B cell (primary cell): ENCODE measurements at regions of chr11 and their contacts with region 1.

Region 1: DNA sequence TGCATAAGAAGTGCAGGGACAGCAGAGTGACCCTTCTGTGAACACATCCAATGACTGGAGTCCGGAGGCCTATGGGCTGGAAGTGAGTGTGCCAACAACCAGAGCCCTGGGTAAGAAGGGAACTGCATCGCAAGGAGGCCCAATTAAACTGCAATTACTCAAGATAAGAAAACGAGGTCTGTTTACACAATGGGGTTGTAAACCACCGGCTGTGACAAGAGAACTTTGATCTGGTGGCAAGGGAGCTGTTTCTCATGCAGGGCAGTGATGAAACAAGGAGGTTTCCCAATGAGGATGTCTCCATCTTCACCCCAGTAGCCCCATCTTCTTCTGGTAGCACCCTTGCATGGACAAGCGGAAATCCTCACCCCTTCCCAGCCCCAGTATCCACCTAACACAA is 21.5 kb downstream of the ETS1 start:
- DNase-seq: no peak
- ATAC-seq: no peak
- H3K4me3 ChIP-seq: no peak overlapping the region
- H3K4me3 Mint-ChIP-seq: no peak overlapping the region
- H3K27ac ChIP-seq: peak overlapping the region in 1 of 2 donors; percentile 33
- H3K27ac Mint-ChIP-seq: peak overlapping the region; percentile 65
- H3K4me1 ChIP-seq: peaks cover 50 to 57% of the 10 kb centered on the region in 2 donors
- H3K4me1 Mint-ChIP-seq: peaks cover 67% of the 10 kb centered on the region
- H3K27me3 ChIP-seq: no peaks in the 10 kb centered on the region
- H3K27me3 Mint-ChIP-seq: no peaks in the 10 kb centered on the region
- CTCF ChIP-seq: no peak

Region 2: DNA sequence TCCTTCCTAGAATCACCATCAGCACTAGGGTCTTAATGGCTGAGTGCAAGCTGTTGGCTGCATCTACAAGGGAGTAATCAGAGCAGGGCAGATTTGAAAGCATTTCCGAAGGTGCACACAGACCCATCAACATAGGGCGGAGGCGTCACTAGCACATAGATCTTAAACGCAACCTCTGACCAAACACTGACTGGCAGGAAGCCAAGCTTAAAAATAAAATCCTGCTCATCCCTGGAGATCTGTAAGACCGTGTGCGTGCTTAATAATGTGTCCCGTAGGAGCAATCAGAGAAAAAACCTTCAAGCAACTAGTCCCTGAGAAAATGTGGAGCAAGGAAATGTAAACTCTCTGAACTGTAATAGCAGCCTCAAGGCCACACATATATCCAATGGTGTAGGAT is 449.0 kb before region 1 on chr11:
- CTCF ChIA-PET with region 1: no interaction called
- POLR2A ChIA-PET with region 1: no interaction called
- intact Hi-C with region 1: no loop called
- DNase-seq: no peak
- ATAC-seq: no peak
- H3K4me3 ChIP-seq: no peak overlapping the region
- H3K4me3 Mint-ChIP-seq: no peak overlapping the region
- H3K27ac ChIP-seq: no peak overlapping the region
- H3K27ac Mint-ChIP-seq: no peak overlapping the region
- H3K4me1 ChIP-seq: no peaks in the 10 kb centered on the region
- H3K4me1 Mint-ChIP-seq: no peaks in the 10 kb centered on the region
- H3K27me3 ChIP-seq: no peaks in the 10 kb centered on the region
- H3K27me3 Mint-ChIP-seq: peaks cover 37% of the 10 kb centered on the region
- CTCF ChIP-seq: no peak

Region 3: DNA sequence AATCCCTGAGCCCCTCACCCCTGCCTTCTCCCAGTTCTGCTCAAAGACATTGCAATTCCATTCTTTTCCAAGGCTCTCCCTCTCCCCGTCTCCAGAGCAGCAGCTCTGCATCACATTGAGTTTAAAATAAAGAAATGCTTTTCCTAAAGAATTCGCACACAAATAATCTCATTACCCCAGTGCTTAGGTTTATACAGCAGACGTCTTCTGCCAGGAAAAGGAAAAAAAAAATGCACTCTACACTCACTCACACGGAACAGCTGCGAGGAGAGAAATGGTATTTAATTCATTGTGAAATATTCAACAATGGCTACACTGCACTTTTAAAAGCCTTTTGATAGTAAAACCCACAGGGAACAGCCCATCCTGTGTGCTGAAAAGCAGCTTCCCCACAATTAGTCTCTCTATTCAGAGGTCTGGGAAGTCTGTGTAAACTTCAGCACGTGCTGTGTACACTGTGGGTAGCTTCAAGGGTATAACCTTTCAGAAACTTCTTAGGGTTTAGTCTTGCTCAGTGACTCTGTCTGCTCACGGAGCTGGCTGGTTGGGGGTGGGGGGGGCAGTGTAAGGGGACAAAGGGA is 21.3 kb before region 1 on chr11:
- CTCF ChIA-PET with region 1: interaction called, 3 read pairs
- POLR2A ChIA-PET with region 1: interaction called, 10 read pairs
- intact Hi-C with region 1: no loop called
- DNase-seq: peak; percentile 21
- ATAC-seq: no peak
- H3K4me3 ChIP-seq: no peak overlapping the region
- H3K4me3 Mint-ChIP-seq: peak overlapping the region; percentile 6
- H3K27ac ChIP-seq: no peak overlapping the region
- H3K27ac Mint-ChIP-seq: peak overlapping the region; percentile 60
- H3K4me1 ChIP-seq: peaks cover 31 to 33% of the 10 kb centered on the region in 2 donors
- H3K4me1 Mint-ChIP-seq: peaks cover 40% of the 10 kb centered on the region
- H3K27me3 ChIP-seq: no peaks in the 10 kb centered on the region
- H3K27me3 Mint-ChIP-seq: no peaks in the 10 kb centered on the region
- CTCF ChIP-seq: no peak

Region 4: DNA sequence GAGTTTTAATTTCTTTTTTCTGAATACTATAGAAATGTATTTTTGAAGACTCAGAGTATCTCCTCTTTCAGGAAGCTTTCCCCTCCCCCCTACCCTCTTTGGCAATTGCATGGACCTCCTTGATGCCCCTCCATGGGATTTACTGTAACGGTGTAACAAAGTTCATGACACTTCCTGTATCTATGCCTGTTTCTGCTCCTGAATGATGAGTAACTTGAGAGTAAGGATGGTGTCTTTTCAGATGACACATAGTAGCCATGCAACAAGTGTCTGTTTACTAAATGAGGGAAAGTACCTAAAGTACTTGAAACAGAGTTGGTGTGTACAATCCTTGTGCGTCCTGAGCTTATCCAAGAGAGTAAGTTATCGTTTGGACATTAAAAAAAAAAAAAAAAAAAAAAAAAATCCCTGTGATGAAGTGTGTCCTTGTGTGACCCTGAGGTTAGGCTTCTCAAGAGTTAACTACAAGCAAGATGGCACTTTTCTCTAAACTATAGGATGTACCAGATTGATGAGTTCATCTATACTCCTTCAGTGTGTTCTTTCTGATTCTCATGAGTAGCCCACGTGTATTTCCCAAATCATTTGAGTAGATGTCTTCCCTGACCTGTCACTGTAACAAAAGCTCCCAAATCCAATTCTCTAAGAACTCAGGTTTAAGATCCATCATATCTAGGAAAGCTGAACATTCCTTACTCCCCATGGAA is 14.1 kb after region 1 on chr11:
- CTCF ChIA-PET with region 1: interaction called, 3 read pairs
- POLR2A ChIA-PET with region 1: interaction called, 3 read pairs
- intact Hi-C with region 1: loop called (anchors 2 kb)
- DNase-seq: no peak
- ATAC-seq: peak; percentile 67
- H3K4me3 ChIP-seq: no peak overlapping the region
- H3K4me3 Mint-ChIP-seq: no peak overlapping the region
- H3K27ac ChIP-seq: no peak overlapping the region
- H3K27ac Mint-ChIP-seq: no peak overlapping the region
- H3K4me1 ChIP-seq: peaks cover 14 to 15% of the 10 kb centered on the region in 2 donors
- H3K4me1 Mint-ChIP-seq: peaks cover 41% of the 10 kb centered on the region
- H3K27me3 ChIP-seq: no peaks in the 10 kb centered on the region
- H3K27me3 Mint-ChIP-seq: no peaks in the 10 kb centered on the region
- CTCF ChIP-seq: no peak

Region 5: DNA sequence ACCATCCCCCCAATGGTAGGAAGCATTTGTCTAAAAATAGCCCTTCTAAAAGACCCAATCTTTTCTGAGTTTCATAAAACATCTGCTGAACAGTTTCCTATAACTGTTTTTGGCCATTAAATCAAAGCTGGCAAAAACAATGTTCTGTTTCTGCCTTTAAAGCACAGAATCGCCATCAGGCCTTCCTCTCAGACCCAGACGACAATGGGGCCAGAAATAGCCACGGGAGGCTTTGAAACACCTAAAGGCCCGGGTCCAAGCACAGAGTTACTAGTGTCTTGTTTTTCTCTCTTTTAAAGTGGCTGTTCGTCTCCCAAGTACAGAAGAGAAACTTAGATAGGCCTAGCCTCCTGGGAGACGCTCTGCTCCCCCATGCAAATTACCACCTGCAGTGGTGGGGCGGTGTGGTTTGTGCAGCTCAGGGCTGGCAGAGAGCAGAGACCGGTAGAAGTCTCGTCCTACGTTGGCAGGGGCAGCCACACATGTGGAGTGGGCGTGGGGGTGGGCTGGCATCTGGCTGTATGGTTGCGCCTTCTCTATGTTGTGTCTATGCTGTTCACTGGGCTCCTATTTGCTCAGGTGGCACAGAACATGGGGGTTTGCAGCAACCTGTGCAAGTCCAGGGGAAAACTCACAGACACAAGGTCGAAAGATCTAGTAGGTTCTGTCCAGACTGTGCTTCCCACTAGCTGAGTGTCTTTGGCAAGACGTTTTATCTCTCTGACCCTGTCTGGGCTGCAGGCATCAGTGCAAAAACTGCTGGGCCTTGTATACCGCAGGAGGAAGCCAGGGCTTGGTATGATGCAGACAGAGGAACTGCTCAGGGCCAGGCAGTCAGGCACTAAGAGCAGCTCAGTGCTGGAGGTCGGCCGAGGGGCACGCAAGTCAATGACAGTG is 45.1 kb after region 1 on chr11:
- CTCF ChIA-PET with region 1: interaction called, 5 read pairs
- POLR2A ChIA-PET with region 1: interaction called, 5 read pairs
- intact Hi-C with region 1: loop called (anchors 1 kb)
- DNase-seq: peak; percentile 95
- ATAC-seq: peak; percentile 89
- H3K4me3 ChIP-seq: peak overlapping the region in 3 of 5 experiments; percentile 20 to 61 (median 29)
- H3K4me3 Mint-ChIP-seq: peak overlapping the region; percentile 58
- H3K27ac ChIP-seq: peak overlapping the region; percentile 93 to 95
- H3K27ac Mint-ChIP-seq: peak overlapping the region; percentile 93
- H3K4me1 ChIP-seq: peaks cover 85 to 87% of the 10 kb centered on the region in 2 donors
- H3K4me1 Mint-ChIP-seq: peaks cover 89% of the 10 kb centered on the region
- H3K27me3 ChIP-seq: no peaks in the 10 kb centered on the region
- H3K27me3 Mint-ChIP-seq: no peaks in the 10 kb centered on the region
- CTCF ChIP-seq: no peak